Left cardiac atrium (tissue), 4 donors: ENCODE measurements at regions of chr19 and their contacts with region 1.

Region 1: DNA sequence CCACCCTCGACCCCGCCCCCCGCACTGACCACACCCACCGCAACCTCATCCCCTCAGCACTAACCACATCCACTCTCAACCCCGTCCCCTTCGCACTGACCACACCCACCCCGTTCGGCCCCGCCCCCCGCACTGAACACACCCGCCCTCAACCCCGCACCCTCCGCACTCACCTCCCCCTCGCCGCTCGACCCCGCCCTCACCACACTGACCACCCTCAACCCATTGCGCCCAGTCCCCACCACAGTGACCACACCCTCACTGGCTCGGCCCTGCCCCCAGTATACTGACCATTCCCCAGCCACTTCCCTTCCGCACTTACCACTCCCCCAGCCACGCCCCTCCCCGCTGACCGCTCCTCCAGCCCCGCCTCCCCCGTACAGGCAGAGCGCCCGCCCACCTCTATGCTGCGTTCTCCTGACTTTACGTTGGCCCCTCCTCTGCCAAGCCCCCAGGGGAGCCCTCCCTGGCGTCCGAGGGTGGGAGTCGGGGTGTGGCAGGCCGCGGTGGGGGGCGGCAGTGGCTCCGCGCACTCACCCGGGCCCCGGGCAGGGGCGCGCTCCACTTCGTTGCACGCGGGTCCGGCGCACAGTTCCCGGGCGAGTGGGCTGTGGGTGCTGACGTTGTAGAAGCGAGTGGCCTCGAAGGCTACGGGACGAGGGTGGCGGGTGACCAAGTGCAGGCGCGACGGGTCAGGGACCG is 8.5 kb downstream of the F2RL3 start:
- DNase-seq: peak; percentile 95
- ATAC-seq: peak; percentile 93 to 95

Region 2: GRCh38 chr19:16771618-16772017 is 125.7 kb before region 1 on chr19:
- intact Hi-C with region 1: loop called in 1 of 2 experiments (anchors 5 kb)
- DNase-seq: peak; percentile 80
- ATAC-seq: peak; percentile 67 to 84

Region 3: GRCh38 chr19:16860118-16860517 is 37.2 kb before region 1 on chr19:
- intact Hi-C with region 1: no loop called
- DNase-seq: no peak
- ATAC-seq: no peak